ENCODE measurements at regions of chr5 and their contacts with region 1.

Region 1: GRCh38 chr5:134225618-134226440 is at the start of gene PPP2CA:
- DNase-seq: peak; percentile 99
- ATAC-seq: peak; percentile 88
- H3K4me3 Mint-ChIP-seq: peak within 1 kb of the TSS; percentile 96
- H3K27ac Mint-ChIP-seq: peak within 1 kb of the TSS; percentile 99
- H3K4me1 Mint-ChIP-seq: peaks cover 41% of the 10 kb centered on the region
- H3K27me3 Mint-ChIP-seq: no peaks in the 10 kb centered on the region
- total RNA-seq, gene PPP2CA: 158 to 167 TPM

Region 2: DNA sequence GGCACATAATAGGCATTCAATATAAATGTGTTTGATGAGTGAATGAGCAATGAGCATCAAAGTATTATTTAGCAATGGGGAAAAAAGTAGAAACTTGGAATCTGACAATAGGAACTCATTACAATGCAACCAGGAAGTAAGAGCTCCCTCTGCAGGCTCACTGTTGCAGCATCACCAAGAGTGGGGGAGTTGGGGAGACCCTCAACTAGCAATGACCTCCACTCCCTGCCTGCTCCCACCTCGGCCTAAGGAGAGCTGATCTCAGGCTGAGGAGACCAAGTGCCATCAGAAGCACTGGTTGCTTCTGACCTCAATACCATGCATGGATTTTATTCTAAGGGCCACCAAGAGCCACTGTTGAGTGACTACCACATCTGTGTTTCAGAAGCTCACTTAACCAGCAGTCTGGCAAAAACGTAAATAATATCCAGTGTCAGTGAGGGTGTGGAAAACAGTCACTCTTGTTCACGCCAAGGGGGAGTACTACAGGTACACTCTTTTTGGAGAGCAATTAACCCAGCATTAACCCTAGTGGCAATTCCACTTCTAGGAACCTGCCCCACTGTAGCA is 229.1 kb before region 1 on chr5:
- CTCF ChIA-PET with region 1: no interaction called
- POLR2A ChIA-PET with region 1: no interaction called
- DNase-seq: no peak
- ATAC-seq: no peak
- H3K4me3 Mint-ChIP-seq: no peak overlapping the region
- H3K27ac Mint-ChIP-seq: peak overlapping the region; percentile 67
- H3K4me1 Mint-ChIP-seq: peaks cover 60% of the 10 kb centered on the region
- H3K27me3 Mint-ChIP-seq: no peaks in the 10 kb centered on the region

Region 3: DNA sequence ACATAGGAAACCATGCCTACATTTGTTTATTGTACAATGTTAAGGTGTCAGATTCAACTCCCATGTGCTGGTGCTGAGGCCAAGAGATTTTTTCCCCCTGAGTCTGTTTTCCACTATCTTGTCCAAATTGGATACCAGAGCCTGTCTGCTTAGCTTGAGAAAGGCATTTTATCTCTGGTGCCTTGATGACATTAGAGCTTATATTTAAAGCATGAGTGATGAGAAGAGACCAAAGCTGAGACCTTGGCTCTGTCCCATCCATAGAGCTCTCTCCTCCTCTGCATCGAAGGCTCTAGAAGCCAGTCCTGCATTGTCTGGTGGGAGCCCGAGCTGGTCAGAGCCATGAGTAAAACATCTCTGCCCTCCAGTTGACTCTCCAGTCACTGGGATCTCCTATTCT is 10.5 kb after region 1 on chr5:
- CTCF ChIA-PET with region 1: interaction called, 4 read pairs
- POLR2A ChIA-PET with region 1: interaction called, 17 read pairs
- DNase-seq: no peak
- ATAC-seq: no peak
- H3K4me3 Mint-ChIP-seq: no peak overlapping the region
- H3K27ac Mint-ChIP-seq: no peak overlapping the region
- H3K4me1 Mint-ChIP-seq: no peaks in the 10 kb centered on the region
- H3K27me3 Mint-ChIP-seq: peaks cover 29% of the 10 kb centered on the region

Region 4: GRCh38 chr5:134370871-134371833 is 145.3 kb after region 1 on chr5 and contains the start of gene UBE2B:
- CTCF ChIA-PET with region 1: interaction called, 7 read pairs
- POLR2A ChIA-PET with region 1: interaction called, 37 read pairs
- DNase-seq: peak; percentile 99
- ATAC-seq: peak; percentile 73
- H3K4me3 Mint-ChIP-seq: peak within 1 kb of the TSS; percentile 99
- H3K27ac Mint-ChIP-seq: peak within 1 kb of the TSS; percentile 100
- H3K4me1 Mint-ChIP-seq: peaks cover 46% of the 10 kb centered on the region
- H3K27me3 Mint-ChIP-seq: no peaks in the 10 kb centered on the region
- total RNA-seq, gene UBE2B: 83.0 to 87.6 TPM

Region 5: GRCh38 chr5:134648425-134649162 is 422.8 kb after region 1 on chr5 and contains the start of gene SEC24A:
- CTCF ChIA-PET with region 1: no interaction called
- POLR2A ChIA-PET with region 1: interaction called, 10 read pairs
- DNase-seq: peak; percentile 91
- ATAC-seq: peak; percentile 92
- H3K4me3 Mint-ChIP-seq: peak within 1 kb of the TSS; percentile 86
- H3K27ac Mint-ChIP-seq: peak within 1 kb of the TSS; percentile 95
- H3K4me1 Mint-ChIP-seq: peaks cover 23% of the 10 kb centered on the region
- H3K27me3 Mint-ChIP-seq: no peaks in the 10 kb centered on the region
- total RNA-seq, gene SEC24A: 20.8 to 22.6 TPM

Measured in activated CD8-positive, alpha-beta T cell treated with anti-CD3 and anti-CD28 coated beads, Interleukin-2, amount 10 ng/mL, durations not matched to agents 7 days and 5 days (primary cell).